Activated naive CD4-positive, alpha-beta T cell treated with anti-CD3 and anti-CD28 coated beads, Interleukin-2, amount 10 ng/mL, durations not matched to agents 7 days and 5 days (primary cell): ENCODE measurements at regions of chr4 and their contacts with region 1.

Region 1: DNA sequence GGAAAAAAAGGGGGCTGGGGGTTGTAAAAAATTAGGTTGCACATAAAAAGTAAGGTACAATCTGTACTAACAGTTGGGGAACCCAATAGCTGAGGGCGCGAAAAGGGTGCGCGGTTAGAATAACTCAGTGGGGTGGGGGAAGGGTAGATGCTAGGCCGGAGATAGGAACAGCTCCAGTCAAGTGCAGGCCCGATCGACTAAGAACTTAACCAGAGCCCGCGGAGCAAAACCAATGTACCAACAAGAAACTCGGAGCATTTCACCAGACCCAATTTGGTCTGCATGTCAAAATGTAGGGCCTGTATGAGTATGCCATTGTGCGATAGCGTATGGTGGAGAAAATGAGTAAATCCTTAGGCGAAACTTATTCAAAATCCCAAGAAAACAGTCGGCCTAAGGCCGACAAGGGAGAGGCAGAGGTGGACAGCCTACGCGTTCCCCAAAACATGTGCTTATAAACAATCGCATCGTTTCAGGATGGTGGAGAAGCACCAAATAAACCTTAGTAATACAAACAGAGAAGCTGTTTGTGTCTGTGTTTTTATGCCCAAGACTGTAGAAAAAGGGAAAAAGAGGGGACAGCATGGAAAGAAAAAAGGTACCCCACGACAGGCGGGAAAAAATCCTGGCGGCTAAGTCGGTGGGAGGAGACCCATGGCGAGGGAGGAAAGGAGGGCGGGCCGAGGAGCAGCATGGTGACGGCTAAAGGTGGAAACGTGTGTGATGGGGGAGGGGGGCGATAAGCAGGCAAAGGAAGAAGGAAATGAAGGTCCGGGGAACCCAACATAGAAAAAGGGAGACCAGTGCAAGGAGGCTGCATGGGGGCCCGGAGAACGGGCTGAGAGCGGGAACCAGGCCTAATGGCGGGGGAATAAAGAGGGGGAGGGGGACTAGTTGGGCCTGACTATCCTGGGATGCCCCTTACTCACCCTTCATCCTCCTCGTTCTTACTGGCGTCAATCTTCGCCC is 990 bp downstream of the HNRNPD start:
- DNase-seq: peak; percentile 85
- H3K4me3 Mint-ChIP-seq: peak overlapping the region; percentile 98
- H3K27ac Mint-ChIP-seq: peak overlapping the region; percentile 97
- H3K4me1 Mint-ChIP-seq: peaks cover 52% of the 10 kb centered on the region
- H3K27me3 Mint-ChIP-seq: peaks cover 7% of the 10 kb centered on the region

Region 2: GRCh38 chr4:82138374-82138773 is 234.4 kb before region 1 on chr4:
- CTCF ChIA-PET with region 1: no interaction called
- DNase-seq: no peak
- H3K4me3 Mint-ChIP-seq: no peak overlapping the region
- H3K27ac Mint-ChIP-seq: no peak overlapping the region
- H3K4me1 Mint-ChIP-seq: peaks cover 22% of the 10 kb centered on the region
- H3K27me3 Mint-ChIP-seq: no peaks in the 10 kb centered on the region

Region 3: GRCh38 chr4:82360298-82361177 is 12.3 kb before region 1 on chr4:
- CTCF ChIA-PET with region 1: interaction called, 22 read pairs
- DNase-seq: no peak
- H3K4me3 Mint-ChIP-seq: no peak overlapping the region
- H3K27ac Mint-ChIP-seq: peak overlapping the region; percentile 60
- H3K4me1 Mint-ChIP-seq: peaks cover 86% of the 10 kb centered on the region
- H3K27me3 Mint-ChIP-seq: no peaks in the 10 kb centered on the region

Region 4: GRCh38 chr4:82428969-82429727 is 56.3 kb after region 1 on chr4:
- CTCF ChIA-PET with region 1: interaction called, 17 read pairs
- DNase-seq: peak; percentile 92
- H3K4me3 Mint-ChIP-seq: peak overlapping the region; percentile 100
- H3K27ac Mint-ChIP-seq: peak overlapping the region; percentile 99
- H3K4me1 Mint-ChIP-seq: peaks cover 60% of the 10 kb centered on the region
- H3K27me3 Mint-ChIP-seq: peaks cover 8% of the 10 kb centered on the region